SK-N-SH (cell line): ENCODE measurements at regions of chr3 and their contacts with region 1.

Region 1: GRCh38 chr3:115783938-115784738 is 160.8 kb downstream of the GAP43 start:
- DNase-seq: peak; percentile 95
- H3K4me3 ChIP-seq: peak overlapping the region; percentile 59 to 66
- H3K27ac ChIP-seq: peak overlapping the region; percentile 97
- H3K4me1 ChIP-seq: peaks cover 10% of the 10 kb centered on the region in 2 experiments; a peak in 3 of 4 replicates
- H3K27me3 ChIP-seq: no peaks in the 10 kb centered on the region
- CTCF ChIP-seq: peak; percentile 96
- EP300 ChIP-seq: peak in 1 of 2 experiments; percentile 45; a peak in 2 of 4 replicates
- RAD21 ChIP-seq: peak; percentile 85

Region 2: GRCh38 chr3:115147329-115148141 is 636.6 kb before region 1 on chr3:
- CTCF ChIA-PET with region 1: interaction called, 8 read pairs
- POLR2A ChIA-PET with region 1: interaction called, 10 read pairs
- DNase-seq: peak; percentile 91
- H3K4me3 ChIP-seq: peak overlapping the region; percentile 69 to 85
- H3K27ac ChIP-seq: peak overlapping the region; percentile 95 to 96
- H3K4me1 ChIP-seq: peaks cover 8 to 11% of the 10 kb centered on the region in 2 experiments; a peak in 2 of 4 replicates
- H3K27me3 ChIP-seq: no peaks in the 10 kb centered on the region
- CTCF ChIP-seq: no peak
- EP300 ChIP-seq: peak; percentile 5 to 14; a peak in 1 of 4 replicates
- RAD21 ChIP-seq: no peak

Region 3: GRCh38 chr3:115217678-115218451 is 566.3 kb before region 1 on chr3:
- CTCF ChIA-PET with region 1: interaction called, 78 read pairs
- POLR2A ChIA-PET with region 1: interaction called, 5 read pairs
- DNase-seq: peak; percentile 35
- H3K4me3 ChIP-seq: peak overlapping the region in 1 of 2 experiments; percentile 20; a peak in 1 of 4 replicates
- H3K27ac ChIP-seq: peak overlapping the region; percentile 22 to 53; a peak in 3 of 4 replicates
- H3K4me1 ChIP-seq: peaks cover 3 to 15% of the 10 kb centered on the region in 2 experiments; a peak in 3 of 4 replicates
- H3K27me3 ChIP-seq: no peaks in the 10 kb centered on the region
- CTCF ChIP-seq: peak; percentile 89
- EP300 ChIP-seq: no peak; a peak in 1 of 4 replicates
- RAD21 ChIP-seq: peak; percentile 98

Region 4: GRCh38 chr3:115671761-115672455 is 112.2 kb before region 1 on chr3:
- CTCF ChIA-PET with region 1: interaction called, 10 read pairs
- POLR2A ChIA-PET with region 1: no interaction called
- DNase-seq: no peak
- H3K4me3 ChIP-seq: no peak overlapping the region
- H3K27ac ChIP-seq: no peak overlapping the region; a peak in 1 of 4 replicates
- H3K4me1 ChIP-seq: peaks cover 0 to 2% of the 10 kb centered on the region in 2 experiments; a peak in 2 of 4 replicates
- H3K27me3 ChIP-seq: no peaks in the 10 kb centered on the region
- CTCF ChIP-seq: no peak
- EP300 ChIP-seq: no peak
- RAD21 ChIP-seq: no peak

Region 5: DNA sequence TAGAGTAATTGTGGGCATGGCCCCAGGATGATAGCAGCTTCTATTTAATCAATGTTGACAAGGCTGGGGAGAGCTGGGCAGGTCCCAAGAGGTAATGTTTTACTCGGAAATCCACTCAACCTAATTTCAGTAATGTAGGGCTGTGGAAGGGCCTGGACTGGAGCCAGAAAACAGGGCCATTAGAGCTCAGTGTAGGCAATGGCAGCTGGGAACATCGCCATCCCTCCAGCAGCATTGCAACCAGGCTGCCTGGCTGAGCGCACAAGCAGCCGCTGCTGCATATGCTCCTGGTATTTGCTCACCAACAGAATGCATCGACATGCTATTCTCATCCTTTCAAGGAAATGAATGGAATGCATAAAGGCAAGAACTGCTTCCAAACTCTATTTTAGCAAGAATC is 70.9 kb before region 1 on chr3:
- CTCF ChIA-PET with region 1: interaction called, 41 read pairs
- POLR2A ChIA-PET with region 1: interaction called, 21 read pairs
- DNase-seq: peak; percentile 73
- H3K4me3 ChIP-seq: 0 out of 4 replicates have a peak overlapping the region, but pooled peaks of 1 of the 2 experiments have one; percentile 3
- H3K27ac ChIP-seq: peak overlapping the region; percentile 63 to 99
- H3K4me1 ChIP-seq: peaks cover 34 to 53% of the 10 kb centered on the region in 2 experiments; a peak in 3 of 4 replicates
- H3K27me3 ChIP-seq: no peaks in the 10 kb centered on the region
- CTCF ChIP-seq: no peak
- EP300 ChIP-seq: peak in 1 of 2 experiments; percentile 82; a peak in 2 of 4 replicates
- RAD21 ChIP-seq: peak; percentile 37

Region 6: GRCh38 chr3:115804722-115805121 is 20.6 kb after region 1 on chr3:
- CTCF ChIA-PET with region 1: interaction called, 35 read pairs
- POLR2A ChIA-PET with region 1: interaction called, 3 read pairs
- DNase-seq: no peak
- H3K4me3 ChIP-seq: no peak overlapping the region
- H3K27ac ChIP-seq: peak overlapping the region in 1 of 2 experiments; percentile 92; a peak in 2 of 4 replicates
- H3K4me1 ChIP-seq: peaks cover 4 to 20% of the 10 kb centered on the region in 2 experiments
- H3K27me3 ChIP-seq: no peaks in the 10 kb centered on the region
- CTCF ChIP-seq: no peak
- EP300 ChIP-seq: peak in 1 of 2 experiments; percentile 43; a peak in 1 of 4 replicates
- RAD21 ChIP-seq: no peak